Stomach (tissue), 19 donors: ENCODE measurements at regions of chr15 and their contacts with region 1.

Region 1: DNA sequence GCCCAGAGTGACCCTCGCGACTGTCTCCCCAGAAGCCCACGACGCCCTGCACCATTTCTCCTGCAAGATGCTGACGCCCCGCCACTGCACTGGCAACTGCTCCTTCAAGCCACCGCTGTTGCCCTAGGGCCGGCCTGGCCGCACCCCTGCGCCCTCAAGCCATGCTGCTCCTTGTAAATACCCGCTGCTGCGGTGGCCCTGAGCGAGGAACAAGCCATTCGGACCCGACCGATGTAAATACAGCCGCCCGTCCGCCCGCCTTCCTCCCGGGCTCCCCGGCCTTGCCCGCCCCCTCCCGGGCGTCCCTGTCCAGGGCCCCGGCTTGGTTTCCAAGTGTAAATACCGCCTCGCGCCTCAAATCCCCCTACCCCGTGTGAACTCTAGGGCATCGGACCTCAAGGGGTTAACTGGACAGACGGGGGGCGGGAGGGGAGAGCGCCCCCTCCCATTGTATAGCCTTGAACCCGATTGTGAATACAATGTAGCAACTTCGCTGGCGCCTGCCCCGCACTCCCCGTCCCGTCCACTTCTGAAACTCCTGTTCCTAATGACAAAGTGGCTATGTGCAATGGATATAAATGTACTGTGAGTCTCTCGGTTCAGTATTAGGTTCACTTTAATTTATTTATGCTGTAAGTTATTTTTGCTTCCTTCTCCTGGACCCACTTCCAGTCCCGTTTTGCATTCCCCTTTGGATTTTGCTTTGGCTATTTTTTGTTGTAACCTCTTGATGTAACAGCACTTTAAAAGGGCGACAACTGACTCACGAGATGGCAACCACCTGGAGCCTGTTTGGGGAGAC is 5.9 kb downstream of the RNU6-1 start:
- DNase-seq: peak; percentile 47 to 77
- H3K4me3 ChIP-seq: peak overlapping the region; percentile 31 to 51 (median 45)
- H3K27ac ChIP-seq: no peak overlapping the region
- H3K4me1 ChIP-seq: peaks cover 45 to 68% (median 62%) of the 10 kb centered on the region in 4 donors
- H3K27me3 ChIP-seq: peaks cover 42 to 73% (median 72%) of the 10 kb centered on the region in 3 donors
- CTCF ChIP-seq: peak in 4 of 7 experiments; percentile 18 to 49 (median 32)
- EP300 ChIP-seq: no peak
- POLR2A ChIP-seq: no peak

Region 2: DNA sequence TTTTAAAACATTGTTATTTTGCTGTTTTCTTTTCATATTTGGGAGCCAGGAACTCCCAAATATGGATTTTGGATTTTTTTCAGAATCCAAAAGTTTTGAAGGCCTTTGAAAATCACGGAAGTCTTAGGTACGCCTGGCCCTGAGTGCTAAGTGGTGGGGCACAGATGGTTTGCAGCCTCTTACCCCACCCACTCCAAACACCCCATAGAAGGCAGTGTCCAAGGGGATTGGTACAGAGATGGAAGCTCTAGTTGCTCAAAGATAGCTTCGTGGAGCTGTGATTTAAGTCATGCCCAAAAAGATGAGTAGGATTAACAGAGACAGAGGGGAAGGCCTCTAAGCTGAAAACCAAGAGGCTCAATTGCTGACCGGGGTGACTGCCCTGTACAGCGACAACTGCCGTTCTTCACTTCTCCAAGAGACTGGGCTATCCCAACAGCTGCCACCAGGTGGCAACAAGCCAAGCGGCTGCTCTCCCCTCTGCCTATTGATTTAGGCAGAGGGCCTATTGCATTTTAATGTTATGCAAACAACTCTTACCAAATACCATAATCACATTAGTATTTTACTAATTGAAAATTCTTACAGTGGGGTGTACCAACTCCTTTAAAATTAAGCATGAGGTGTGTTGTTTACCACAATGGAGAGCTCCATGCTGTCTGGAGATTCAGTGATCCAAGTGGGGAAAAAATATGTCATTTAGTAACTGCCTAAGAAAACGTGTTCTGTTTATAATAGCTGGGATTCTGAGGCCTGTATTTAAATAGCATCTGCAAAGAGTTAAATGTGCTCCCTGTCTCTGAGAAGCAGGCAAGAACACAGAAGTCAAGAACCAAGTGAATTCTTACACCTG is 377.0 kb before region 1 on chr15:
- intact Hi-C with region 1: loop called (anchors 5 kb)
- DNase-seq: peak; percentile 89 to 90
- H3K4me3 ChIP-seq: no peak overlapping the region
- H3K27ac ChIP-seq: no peak overlapping the region
- H3K4me1 ChIP-seq: peaks cover 0 to 7% (median 5%) of the 10 kb centered on the region in 4 donors
- H3K27me3 ChIP-seq: no peaks in the 10 kb centered on the region
- CTCF ChIP-seq: peak in 5 of 7 experiments; percentile 67 to 88 (median 76)
- EP300 ChIP-seq: no peak
- POLR2A ChIP-seq: no peak

Region 3: GRCh38 chr15:67927501-67928168 is 93.7 kb after region 1 on chr15:
- intact Hi-C with region 1: no loop called
- DNase-seq: peak; percentile 91 to 92
- H3K4me3 ChIP-seq: no peak overlapping the region
- H3K27ac ChIP-seq: peak overlapping the region; percentile 40 to 83 (median 67)
- H3K4me1 ChIP-seq: peaks cover 30 to 83% (median 51%) of the 10 kb centered on the region in 4 donors
- H3K27me3 ChIP-seq: no peaks in the 10 kb centered on the region
- CTCF ChIP-seq: no peak
- EP300 ChIP-seq: no peak
- POLR2A ChIP-seq: no peak

Region 4: DNA sequence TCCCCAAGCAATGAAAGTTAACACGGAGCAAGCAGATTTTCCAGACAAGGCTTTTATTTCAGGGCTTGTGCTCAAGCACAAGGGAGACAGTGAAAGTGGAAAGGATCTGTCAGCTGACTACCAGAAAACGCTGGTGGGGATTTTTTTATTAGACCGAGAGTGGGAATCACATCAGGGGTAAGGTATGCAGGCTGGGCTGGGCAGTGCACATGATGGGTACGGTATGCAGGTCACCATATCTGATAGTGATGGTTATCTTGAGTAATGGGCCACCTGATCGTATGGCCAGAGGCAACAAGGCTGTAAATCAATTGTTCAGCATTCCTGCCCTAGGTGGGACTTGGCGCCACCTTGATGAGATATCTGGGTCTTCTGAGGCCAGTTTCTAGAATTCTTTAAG is 183.3 kb after region 1 on chr15:
- intact Hi-C with region 1: no loop called
- DNase-seq: no peak
- H3K4me3 ChIP-seq: no peak overlapping the region
- H3K27ac ChIP-seq: no peak overlapping the region
- H3K4me1 ChIP-seq: peaks cover 0 to 24% (median 10%) of the 10 kb centered on the region in 4 donors
- H3K27me3 ChIP-seq: no peaks in the 10 kb centered on the region
- CTCF ChIP-seq: no peak
- EP300 ChIP-seq: no peak
- POLR2A ChIP-seq: no peak